Aorta (tissue), 5 donors: ENCODE measurements at regions of chr4 and their contacts with region 1.

Region 1: GRCh38 chr4:147855571-147856009 is 123.7 kb downstream of the ARHGAP10 start:
- DNase-seq: no peak
- ATAC-seq: no peak
- H3K4me3 ChIP-seq: no peak overlapping the region
- H3K27ac ChIP-seq: peak overlapping the region; percentile 43 to 57
- H3K4me1 ChIP-seq: peaks cover 0 to 4% of the 10 kb centered on the region in 2 donors
- H3K27me3 ChIP-seq: no peaks in the 10 kb centered on the region

Region 2: DNA sequence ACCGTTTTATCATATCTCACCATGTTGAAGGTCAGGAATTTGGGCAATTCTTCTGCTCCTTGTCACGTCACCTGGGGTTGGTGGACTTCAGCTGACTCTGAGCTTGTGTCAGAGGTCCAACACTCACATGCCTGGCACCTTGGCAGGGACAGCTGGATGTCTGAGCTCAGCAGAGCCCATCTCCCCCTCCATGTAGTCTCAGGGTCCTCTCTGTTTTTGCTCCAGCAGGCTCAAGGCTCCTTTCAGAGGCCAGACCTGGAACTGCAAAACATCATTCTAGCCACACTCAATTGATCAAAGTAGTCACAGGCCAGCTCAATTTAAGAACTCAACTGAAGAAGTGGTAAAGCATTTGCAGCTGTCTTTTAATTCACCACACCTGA is 329.3 kb before region 1 on chr4:
- intact Hi-C with region 1: no loop called
- DNase-seq: no peak
- ATAC-seq: no peak
- H3K4me3 ChIP-seq: no peak overlapping the region
- H3K27ac ChIP-seq: no peak overlapping the region
- H3K4me1 ChIP-seq: peaks cover 0 to 2% of the 10 kb centered on the region in 2 donors
- H3K27me3 ChIP-seq: no peaks in the 10 kb centered on the region

Region 3: DNA sequence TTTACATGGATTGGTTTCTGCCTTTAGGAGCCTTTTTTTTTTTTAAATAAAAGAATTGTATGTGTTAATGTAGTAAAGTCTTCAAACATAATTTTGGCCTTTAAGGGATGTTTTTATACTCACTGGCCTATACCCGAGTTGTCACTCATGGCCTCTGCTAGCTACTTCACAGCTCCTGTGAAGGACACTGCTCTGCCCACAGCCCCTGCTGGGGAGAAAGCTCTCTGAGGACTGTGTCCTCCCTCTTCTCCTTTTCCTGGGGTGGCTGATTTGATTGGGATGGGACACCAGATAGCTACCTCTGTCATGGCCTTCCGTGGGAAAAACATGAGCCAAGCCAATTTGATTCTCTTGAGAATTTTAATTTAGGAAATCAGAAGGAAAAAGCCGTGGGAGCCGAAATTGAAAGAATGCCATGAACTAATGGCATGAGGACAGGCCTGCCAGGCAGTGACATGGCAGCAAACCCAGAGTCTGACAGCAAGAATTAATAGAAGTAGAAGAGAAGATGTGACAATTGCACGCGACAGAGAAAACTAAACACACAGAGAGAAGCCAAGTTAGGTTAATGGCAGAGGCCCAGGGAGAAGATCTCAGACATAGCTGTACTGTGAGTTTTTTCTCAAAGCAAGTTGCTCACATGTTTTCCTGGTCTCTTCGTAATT is 42.3 kb before region 1 on chr4:
- intact Hi-C with region 1: loop called in 1 of 2 experiments (anchors 5 kb)
- DNase-seq: no peak
- ATAC-seq: no peak
- H3K4me3 ChIP-seq: no peak overlapping the region
- H3K27ac ChIP-seq: peak overlapping the region; percentile 37 to 87
- H3K4me1 ChIP-seq: peaks cover 11 to 25% of the 10 kb centered on the region in 2 donors
- H3K27me3 ChIP-seq: no peaks in the 10 kb centered on the region

Region 4: GRCh38 chr4:147822128-147822527 is 33.5 kb before region 1 on chr4:
- intact Hi-C with region 1: loop called (anchors 5 kb)
- DNase-seq: peak in 1 of 2 donors; percentile 77
- ATAC-seq: no peak
- H3K4me3 ChIP-seq: no peak overlapping the region
- H3K27ac ChIP-seq: no peak overlapping the region
- H3K4me1 ChIP-seq: peaks cover 5 to 17% of the 10 kb centered on the region in 2 donors
- H3K27me3 ChIP-seq: no peaks in the 10 kb centered on the region